ENCODE measurements at regions of chr1 and their contacts with region 1.

Region 1: GRCh38 chr1:207404849-207405525 is 49.1 kb upstream of the CR2 start:
- DNase-seq: peak in 1 of 4 donors; percentile 34
- ATAC-seq: peak; percentile 79
- H3K4me3 ChIP-seq: no peak overlapping the region
- H3K27ac ChIP-seq: no peak overlapping the region
- H3K4me1 ChIP-seq: no peaks in the 10 kb centered on the region
- H3K27me3 ChIP-seq: no peaks in the 10 kb centered on the region
- CTCF ChIP-seq: peak; percentile 54 to 87 (median 81)
- POLR2A ChIP-seq: no peak

Region 2: DNA sequence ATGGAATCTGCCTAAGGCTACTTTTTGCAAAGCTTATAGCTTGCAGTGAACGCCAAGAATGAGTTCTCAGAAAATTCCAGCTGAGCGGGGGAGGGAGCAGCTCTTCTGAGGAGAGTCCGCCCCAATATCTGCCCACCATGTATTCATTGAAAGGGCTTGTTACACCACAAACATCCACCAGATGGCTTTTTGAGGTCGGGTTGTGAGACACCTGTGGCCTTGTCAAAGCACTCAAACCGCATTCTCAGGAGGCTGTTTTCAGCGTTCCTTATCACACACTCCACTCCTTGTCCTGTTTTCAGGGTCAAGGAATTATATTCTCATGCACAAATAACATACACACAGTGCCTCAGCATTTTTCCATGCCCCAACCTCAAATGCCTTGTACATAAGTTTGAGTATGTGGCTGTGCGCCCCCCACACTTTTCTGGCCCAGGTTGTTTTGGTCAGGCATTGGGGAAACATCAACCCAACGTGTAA is 320.2 kb before region 1 on chr1:
- intact Hi-C with region 1: loop called (anchors 5 kb)
- DNase-seq: peak; percentile 61 to 78 (median 70)
- ATAC-seq: peak; percentile 72
- H3K4me3 ChIP-seq: no peak overlapping the region
- H3K27ac ChIP-seq: no peak overlapping the region
- H3K4me1 ChIP-seq: peaks cover 32% of the 10 kb centered on the region
- H3K27me3 ChIP-seq: no peaks in the 10 kb centered on the region
- CTCF ChIP-seq: peak; percentile 45 to 78 (median 76)
- POLR2A ChIP-seq: no peak

Region 3: GRCh38 chr1:207454046-207454964 is 49.3 kb after region 1 on chr1 and contains the start of gene CR2:
- intact Hi-C with region 1: no loop called
- DNase-seq: peak; percentile 54 to 79 (median 66)
- ATAC-seq: peak; percentile 91
- H3K4me3 ChIP-seq: peak within 1 kb of the TSS in 1 of 2 donors; percentile 18
- H3K27ac ChIP-seq: no peak within 1 kb of the TSS
- H3K4me1 ChIP-seq: peaks cover 17% of the 10 kb centered on the region
- H3K27me3 ChIP-seq: no peaks in the 10 kb centered on the region
- CTCF ChIP-seq: peak in 4 of 7 experiments; percentile 5 to 32 (median 22)
- POLR2A ChIP-seq: no peak
- total RNA-seq, gene CR2: not detected

Measured in body of pancreas (tissue), 4 donors.